MCF 10A (cell line): ENCODE measurements at regions of chr4 and their contacts with region 1.

Region 1: GRCh38 chr4:6327041-6327917 is 57.6 kb downstream of the WFS1 start:
- DNase-seq: peak; percentile 74
- H3K4me3 Mint-ChIP-seq: no peak overlapping the region
- H3K27ac Mint-ChIP-seq: no peak overlapping the region
- H3K4me1 Mint-ChIP-seq: no peaks in the 10 kb centered on the region
- H3K27me3 Mint-ChIP-seq: no peaks in the 10 kb centered on the region
- CTCF ChIP-seq: peak; percentile 97

Region 2: GRCh38 chr4:5054532-5054931 is 1272.7 kb before region 1 on chr4:
- CTCF ChIA-PET with region 1: no interaction called
- POLR2A ChIA-PET with region 1: no interaction called
- intact Hi-C with region 1: no loop called
- DNase-seq: no peak
- H3K4me3 Mint-ChIP-seq: no peak overlapping the region
- H3K27ac Mint-ChIP-seq: peak overlapping the region; percentile 59
- H3K4me1 Mint-ChIP-seq: no peaks in the 10 kb centered on the region
- H3K27me3 Mint-ChIP-seq: no peaks in the 10 kb centered on the region
- CTCF ChIP-seq: no peak

Region 3: DNA sequence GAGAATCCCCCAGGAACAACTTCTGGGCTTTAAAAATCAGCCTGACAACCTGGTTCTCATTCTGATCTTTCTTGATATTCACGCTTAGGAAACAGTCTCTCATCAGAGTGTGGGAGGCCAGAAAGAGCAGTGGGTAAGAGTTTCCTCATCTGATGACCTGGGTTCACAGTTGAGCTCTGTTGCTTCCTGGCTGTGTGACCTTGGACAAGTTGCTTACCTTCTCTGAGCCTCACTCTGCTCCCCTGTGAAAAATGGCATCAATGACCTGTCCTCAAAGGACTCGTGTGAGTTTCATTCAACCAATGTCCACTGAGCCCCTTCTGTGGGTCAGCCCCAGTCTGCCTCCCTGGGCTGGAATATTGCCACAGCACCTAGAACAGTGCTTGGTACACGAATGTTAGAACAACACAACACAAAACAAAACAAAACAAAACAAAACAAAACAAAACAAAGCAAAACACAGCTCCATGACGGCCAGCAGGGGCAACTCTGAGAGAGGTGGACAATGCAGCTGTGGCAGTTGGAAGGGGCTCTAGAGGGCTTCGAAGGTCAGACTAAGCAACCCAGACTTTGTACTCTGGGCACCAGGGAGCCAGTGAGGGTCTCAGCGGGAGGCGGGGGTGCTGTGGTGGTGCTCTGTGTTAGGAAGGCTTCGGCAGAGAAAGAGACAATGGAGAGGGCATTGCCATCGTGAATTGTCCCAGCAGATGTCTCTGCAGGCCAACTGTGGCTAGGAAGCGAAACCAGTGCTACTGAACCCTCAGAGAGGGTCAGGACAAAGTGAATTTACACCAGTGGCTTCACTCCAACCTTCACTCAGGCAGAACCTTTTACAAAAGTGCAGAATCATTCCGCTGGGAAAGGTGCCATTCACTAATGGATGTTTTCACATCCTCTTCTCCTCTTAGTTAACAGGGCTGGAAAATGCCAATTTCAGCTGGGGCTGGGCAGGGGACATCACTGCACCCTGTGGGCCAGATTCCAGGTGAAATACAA is 294.7 kb before region 1 on chr4:
- CTCF ChIA-PET with region 1: no interaction called
- POLR2A ChIA-PET with region 1: no interaction called
- intact Hi-C with region 1: no loop called
- DNase-seq: peak; percentile 11
- H3K4me3 Mint-ChIP-seq: no peak overlapping the region
- H3K27ac Mint-ChIP-seq: no peak overlapping the region
- H3K4me1 Mint-ChIP-seq: no peaks in the 10 kb centered on the region
- H3K27me3 Mint-ChIP-seq: no peaks in the 10 kb centered on the region
- CTCF ChIP-seq: no peak

Region 4: GRCh38 chr4:6257247-6258025 is 69.8 kb before region 1 on chr4:
- CTCF ChIA-PET with region 1: interaction called, 522 read pairs
- POLR2A ChIA-PET with region 1: interaction called, 4 read pairs
- intact Hi-C with region 1: no loop called
- DNase-seq: no peak
- H3K4me3 Mint-ChIP-seq: no peak overlapping the region
- H3K27ac Mint-ChIP-seq: no peak overlapping the region
- H3K4me1 Mint-ChIP-seq: no peaks in the 10 kb centered on the region
- H3K27me3 Mint-ChIP-seq: no peaks in the 10 kb centered on the region
- CTCF ChIP-seq: no peak

Region 5: GRCh38 chr4:6269616-6270511 is 57.4 kb before region 1 on chr4 and contains the start of gene WFS1:
- CTCF ChIA-PET with region 1: interaction called, 22 read pairs
- POLR2A ChIA-PET with region 1: no interaction called
- intact Hi-C with region 1: no loop called
- DNase-seq: peak; percentile 97
- H3K4me3 Mint-ChIP-seq: peak within 1 kb of the TSS; percentile 73
- H3K27ac Mint-ChIP-seq: no peak within 1 kb of the TSS
- H3K4me1 Mint-ChIP-seq: peaks cover 42% of the 10 kb centered on the region
- H3K27me3 Mint-ChIP-seq: peaks cover 17% of the 10 kb centered on the region
- CTCF ChIP-seq: no peak
- total RNA-seq, gene WFS1: 41.7 and 62.4 TPM in 2 replicates

Region 6: GRCh38 chr4:6343950-6344408 is 16.7 kb after region 1 on chr4:
- CTCF ChIA-PET with region 1: interaction called, 51 read pairs
- POLR2A ChIA-PET with region 1: no interaction called
- intact Hi-C with region 1: no loop called
- DNase-seq: peak; percentile 84
- H3K4me3 Mint-ChIP-seq: peak overlapping the region; percentile 19
- H3K27ac Mint-ChIP-seq: peak overlapping the region; percentile 39
- H3K4me1 Mint-ChIP-seq: peaks cover 8% of the 10 kb centered on the region
- H3K27me3 Mint-ChIP-seq: peaks cover 1% of the 10 kb centered on the region
- CTCF ChIP-seq: peak; percentile 43